ENCODE measurements at regions of chr20 and their contacts with region 1.

Region 1: DNA sequence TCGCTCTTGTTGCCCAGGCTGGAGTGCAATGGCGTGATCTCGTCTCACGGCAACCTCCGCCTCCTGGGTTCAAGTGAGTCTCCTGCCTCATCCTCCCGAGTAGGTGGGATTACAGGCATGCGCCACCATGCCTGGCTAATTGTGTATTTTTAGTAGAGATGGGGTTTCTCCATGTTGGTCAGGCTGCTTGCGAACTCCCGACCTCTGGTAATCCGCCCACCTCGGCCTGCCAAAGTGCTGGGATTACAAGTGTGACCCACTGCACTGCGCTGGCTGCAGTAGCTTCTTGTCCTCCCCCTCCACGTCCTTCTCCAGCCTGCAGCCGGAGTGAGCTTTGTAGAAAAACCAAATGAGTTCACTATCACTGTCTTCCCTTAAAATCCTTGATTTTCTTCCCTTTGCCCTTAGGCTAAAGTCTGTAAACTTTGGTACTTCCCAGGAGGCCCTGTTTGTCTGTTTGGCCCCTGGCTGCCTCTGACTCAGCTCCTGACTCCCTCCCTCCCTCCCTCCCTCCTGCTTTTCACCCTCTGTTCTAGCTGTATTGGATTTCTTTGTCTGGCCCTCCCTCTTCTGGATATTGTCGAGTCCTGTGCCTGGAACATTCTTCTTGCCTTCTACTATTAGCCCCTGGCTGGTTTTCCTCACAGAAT is 12.9 kb downstream of the PARD6B start:
- H3K4me3 ChIP-seq: no peak overlapping the region
- H3K27ac ChIP-seq: peak overlapping the region; percentile 61
- H3K4me1 ChIP-seq: peaks cover 25% of the 10 kb centered on the region
- CTCF ChIP-seq: no peak; the same call in 1 of the 2 replicates

Region 2: GRCh38 chr20:50625986-50626677 is 118.1 kb before region 1 on chr20:
- CTCF ChIA-PET with region 1: interaction called, 40 read pairs
- POLR2A ChIA-PET with region 1: no interaction called
- H3K4me3 ChIP-seq: no peak overlapping the region
- H3K27ac ChIP-seq: no peak overlapping the region
- H3K4me1 ChIP-seq: no peaks in the 10 kb centered on the region
- CTCF ChIP-seq: peak; percentile 77

Region 3: GRCh38 chr20:50635667-50636503 is 108.4 kb before region 1 on chr20:
- CTCF ChIA-PET with region 1: interaction called, 10 read pairs
- POLR2A ChIA-PET with region 1: no interaction called
- H3K4me3 ChIP-seq: no peak overlapping the region
- H3K27ac ChIP-seq: no peak overlapping the region
- H3K4me1 ChIP-seq: peaks cover 4% of the 10 kb centered on the region
- CTCF ChIP-seq: peak; percentile 94

Region 4: DNA sequence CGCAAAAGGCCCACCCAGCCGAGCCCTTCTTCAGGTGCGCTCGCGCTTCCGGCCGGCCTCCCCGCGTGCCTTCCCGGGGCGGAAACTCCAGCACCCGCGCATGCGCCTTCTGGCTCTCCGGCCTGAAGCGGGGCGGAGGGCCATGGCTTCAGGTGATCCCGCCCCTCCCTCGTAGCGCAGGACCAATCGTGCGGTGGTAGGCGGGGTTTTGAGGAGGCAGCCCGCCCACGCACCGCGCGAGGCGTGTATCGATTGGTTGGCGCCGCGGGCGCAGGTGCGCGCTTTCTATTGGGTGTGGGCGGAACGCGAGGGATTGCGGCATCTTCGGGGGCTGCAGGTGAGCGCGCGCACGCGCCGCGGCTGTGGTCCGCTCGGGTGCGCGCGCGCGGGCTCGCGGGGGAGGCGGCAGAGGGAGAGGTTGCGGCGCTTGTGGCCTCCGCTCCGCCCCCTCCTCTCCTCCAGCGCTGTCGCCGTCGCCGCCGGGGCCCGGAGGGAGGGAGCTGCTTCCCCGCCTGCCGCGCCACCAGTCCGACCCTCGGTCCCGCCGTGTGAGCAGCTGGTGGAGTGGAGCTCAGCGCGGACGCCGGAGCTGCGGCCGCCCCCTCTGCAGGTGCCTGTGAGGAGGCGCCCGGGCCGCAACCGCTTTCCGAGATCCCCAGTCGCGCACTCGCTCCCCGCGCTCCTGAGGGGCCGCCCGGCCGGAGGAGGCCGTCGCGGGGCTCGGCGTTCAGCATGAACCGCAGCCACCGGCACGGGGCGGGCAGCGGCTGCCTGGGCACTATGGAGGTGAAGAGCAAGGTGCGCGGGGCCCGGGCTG is 13.0 kb before region 1 on chr20 and contains the start of gene PARD6B:
- CTCF ChIA-PET with region 1: interaction called, 14 read pairs
- POLR2A ChIA-PET with region 1: interaction called, 10 read pairs
- H3K4me3 ChIP-seq: peak within 1 kb of the TSS; percentile 94
- H3K27ac ChIP-seq: peak within 1 kb of the TSS; percentile 88
- H3K4me1 ChIP-seq: peaks cover 11% of the 10 kb centered on the region
- CTCF ChIP-seq: no peak